Activated B cell treated with CpG ODN at 0.5 μM for 24 hours (primary cell): ENCODE measurements at regions of chr2 and their contacts with region 1.

Region 1: DNA sequence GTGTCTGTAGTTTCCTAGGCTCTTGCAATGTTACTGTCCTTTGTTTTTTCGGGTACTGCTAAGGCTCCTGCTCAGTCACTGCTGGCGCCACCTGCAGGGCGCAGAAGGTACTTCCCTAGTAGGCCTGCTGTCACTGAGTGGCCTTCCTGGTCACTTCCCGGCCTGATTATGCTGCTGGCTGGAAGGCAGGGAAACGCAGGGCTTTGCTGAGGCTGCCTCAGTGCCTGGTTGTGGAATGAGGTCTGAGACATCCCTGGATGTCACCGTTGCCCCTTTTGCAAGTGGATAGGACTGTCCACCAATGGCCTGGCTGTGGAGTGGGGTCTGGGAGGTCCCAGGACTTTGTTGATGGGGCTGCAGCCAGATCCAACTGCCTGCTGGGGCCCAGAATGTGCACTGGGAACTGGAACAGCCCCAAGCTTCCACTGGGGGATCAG is 13.1 kb downstream of the DAW1 start:
- DNase-seq: peak; percentile 24
- ATAC-seq: peak; percentile 57
- H3K4me3 Mint-ChIP-seq: no peak overlapping the region
- H3K27ac Mint-ChIP-seq: no peak overlapping the region
- H3K4me1 Mint-ChIP-seq: peaks cover 9% of the 10 kb centered on the region
- H3K27me3 Mint-ChIP-seq: peaks cover 3% of the 10 kb centered on the region
- CTCF ChIP-seq: no peak

Region 2: DNA sequence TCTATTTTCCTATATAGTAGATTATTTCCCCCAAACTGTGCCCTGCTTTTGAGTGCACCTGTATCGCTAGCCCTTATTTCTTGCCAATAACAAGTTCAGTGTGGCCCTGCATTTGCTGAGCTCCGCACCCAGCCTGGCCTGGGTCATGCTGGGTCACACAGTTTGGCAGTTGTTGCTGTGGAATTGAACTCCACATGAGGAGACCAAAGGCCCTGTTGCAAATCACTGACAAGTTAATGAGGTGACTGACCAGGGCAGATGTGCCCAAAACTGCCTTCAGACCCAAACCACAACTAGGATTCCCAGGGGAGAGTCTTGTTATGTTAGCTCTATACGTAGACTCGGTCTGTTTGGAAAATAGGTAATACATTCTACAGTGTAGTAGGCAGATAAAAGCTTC is 751.5 kb before region 1 on chr2:
- CTCF ChIA-PET with region 1: no interaction called
- POLR2A ChIA-PET with region 1: no interaction called
- intact Hi-C with region 1: loop called (anchors 5 kb)
- DNase-seq: no peak
- ATAC-seq: no peak
- H3K4me3 Mint-ChIP-seq: no peak overlapping the region
- H3K27ac Mint-ChIP-seq: no peak overlapping the region
- H3K4me1 Mint-ChIP-seq: no peaks in the 10 kb centered on the region
- H3K27me3 Mint-ChIP-seq: peaks cover 1% of the 10 kb centered on the region
- CTCF ChIP-seq: no peak

Region 3: GRCh38 chr2:227862227-227862740 is 22.2 kb before region 1 on chr2:
- CTCF ChIA-PET with region 1: no interaction called
- POLR2A ChIA-PET with region 1: no interaction called
- intact Hi-C with region 1: no loop called
- DNase-seq: no peak
- ATAC-seq: no peak
- H3K4me3 Mint-ChIP-seq: no peak overlapping the region
- H3K27ac Mint-ChIP-seq: no peak overlapping the region
- H3K4me1 Mint-ChIP-seq: no peaks in the 10 kb centered on the region
- H3K27me3 Mint-ChIP-seq: no peaks in the 10 kb centered on the region
- CTCF ChIP-seq: no peak